ENCODE measurements at regions of chr1 and their contacts with region 1.

Region 1: DNA sequence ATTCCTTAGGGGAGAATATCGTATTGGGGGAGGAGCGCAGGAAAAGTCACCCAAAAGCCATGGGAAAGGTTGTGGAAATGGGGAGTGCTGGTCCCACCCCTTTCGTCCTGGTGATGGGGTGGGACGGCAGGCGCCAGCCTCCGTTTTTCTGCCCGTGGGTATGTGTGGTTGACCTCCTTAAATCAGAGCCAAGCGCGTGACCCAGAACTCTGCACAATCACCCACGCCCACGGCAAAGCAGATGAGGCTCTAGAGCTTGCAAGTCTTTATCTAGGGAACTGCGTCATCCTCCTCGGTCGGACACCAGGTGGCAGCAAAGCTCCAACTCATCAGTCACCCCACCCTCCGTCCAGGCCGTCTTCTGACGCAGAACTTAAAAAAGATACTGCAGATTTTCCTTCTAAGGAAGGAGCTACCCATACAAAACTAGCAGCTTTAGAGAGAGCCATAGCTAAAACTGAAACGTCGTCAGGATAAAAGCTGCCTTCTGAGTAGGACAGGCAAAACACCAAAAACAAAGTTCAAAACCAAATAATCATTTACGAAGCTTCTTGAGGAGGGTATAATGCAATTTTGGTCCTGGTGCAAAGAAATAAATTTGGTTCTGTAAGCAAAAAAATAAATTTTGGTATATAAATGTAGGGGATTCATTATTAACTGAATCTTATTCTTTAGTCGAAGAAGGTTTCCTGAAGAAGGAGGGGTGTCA is 62.0 kb downstream of the TBX19 start:
- DNase-seq: peak; percentile 61
- ATAC-seq: peak; percentile 98
- H3K4me3 ChIP-seq: no peak overlapping the region
- H3K27ac ChIP-seq: no peak overlapping the region
- H3K4me1 ChIP-seq: peaks cover 10% of the 10 kb centered on the region
- H3K27me3 ChIP-seq: no peaks in the 10 kb centered on the region
- CTCF ChIP-seq: peak; percentile 73 to 91 (median 82)
- EP300 ChIP-seq: no peak
- POLR2A ChIP-seq: no peak
- RAD21 ChIP-seq: peak; percentile 86

Region 2: GRCh38 chr1:168202941-168203654 is 139.6 kb before region 1 on chr1:
- CTCF ChIA-PET with region 1: no interaction called
- POLR2A ChIA-PET with region 1: no interaction called
- RAD21 ChIA-PET with region 1: no interaction called
- SMC1A ChIA-PET with region 1: no interaction called
- in situ Hi-C with region 1: no loop called
- intact Hi-C with region 1: no loop called
- DNase-seq: no peak
- ATAC-seq: no peak
- H3K4me3 ChIP-seq: no peak overlapping the region
- H3K27ac ChIP-seq: no peak overlapping the region
- H3K4me1 ChIP-seq: no peaks in the 10 kb centered on the region
- H3K27me3 ChIP-seq: no peaks in the 10 kb centered on the region
- CTCF ChIP-seq: no peak
- EP300 ChIP-seq: no peak
- POLR2A ChIP-seq: no peak
- RAD21 ChIP-seq: no peak

Region 3: DNA sequence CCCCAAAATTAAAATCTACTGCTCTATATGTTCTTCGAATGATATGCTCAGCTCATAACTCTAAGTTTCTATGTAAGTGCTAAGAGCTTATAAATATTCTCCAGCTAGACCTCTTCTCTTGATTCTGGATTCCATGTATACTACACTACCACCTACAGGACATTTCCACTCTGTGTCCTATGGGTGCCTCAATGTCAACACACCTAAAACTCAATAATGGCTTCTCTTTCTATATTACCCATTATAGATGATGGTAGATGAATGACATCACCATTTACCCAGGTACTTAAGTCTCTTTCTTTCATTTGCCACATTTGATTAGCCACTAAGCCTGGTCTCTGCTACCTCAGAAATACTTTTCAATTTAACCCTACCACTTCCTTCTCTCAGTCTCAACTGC is 20.8 kb before region 1 on chr1:
- CTCF ChIA-PET with region 1: interaction called, 20 read pairs
- POLR2A ChIA-PET with region 1: no interaction called
- RAD21 ChIA-PET with region 1: no interaction called
- SMC1A ChIA-PET with region 1: interaction called, 12 read pairs
- in situ Hi-C with region 1: no loop called
- intact Hi-C with region 1: no loop called
- DNase-seq: no peak
- ATAC-seq: peak; percentile 84
- H3K4me3 ChIP-seq: no peak overlapping the region
- H3K27ac ChIP-seq: no peak overlapping the region
- H3K4me1 ChIP-seq: no peaks in the 10 kb centered on the region
- H3K27me3 ChIP-seq: no peaks in the 10 kb centered on the region
- CTCF ChIP-seq: peak; percentile 27 to 47 (median 37); a peak in 4 of 6 replicates
- EP300 ChIP-seq: no peak
- POLR2A ChIP-seq: no peak
- RAD21 ChIP-seq: peak; percentile 49

Region 4: GRCh38 chr1:168403140-168403539 is 60.4 kb after region 1 on chr1:
- CTCF ChIA-PET with region 1: interaction called, 10 read pairs
- POLR2A ChIA-PET with region 1: interaction called, 4 read pairs
- RAD21 ChIA-PET with region 1: interaction called, 14 read pairs
- SMC1A ChIA-PET with region 1: interaction called, 11 read pairs
- in situ Hi-C with region 1: no loop called
- intact Hi-C with region 1: no loop called
- DNase-seq: no peak
- ATAC-seq: no peak
- H3K4me3 ChIP-seq: no peak overlapping the region
- H3K27ac ChIP-seq: no peak overlapping the region
- H3K4me1 ChIP-seq: no peaks in the 10 kb centered on the region
- H3K27me3 ChIP-seq: no peaks in the 10 kb centered on the region
- CTCF ChIP-seq: no peak
- EP300 ChIP-seq: no peak
- POLR2A ChIP-seq: no peak
- RAD21 ChIP-seq: no peak

Region 5: DNA sequence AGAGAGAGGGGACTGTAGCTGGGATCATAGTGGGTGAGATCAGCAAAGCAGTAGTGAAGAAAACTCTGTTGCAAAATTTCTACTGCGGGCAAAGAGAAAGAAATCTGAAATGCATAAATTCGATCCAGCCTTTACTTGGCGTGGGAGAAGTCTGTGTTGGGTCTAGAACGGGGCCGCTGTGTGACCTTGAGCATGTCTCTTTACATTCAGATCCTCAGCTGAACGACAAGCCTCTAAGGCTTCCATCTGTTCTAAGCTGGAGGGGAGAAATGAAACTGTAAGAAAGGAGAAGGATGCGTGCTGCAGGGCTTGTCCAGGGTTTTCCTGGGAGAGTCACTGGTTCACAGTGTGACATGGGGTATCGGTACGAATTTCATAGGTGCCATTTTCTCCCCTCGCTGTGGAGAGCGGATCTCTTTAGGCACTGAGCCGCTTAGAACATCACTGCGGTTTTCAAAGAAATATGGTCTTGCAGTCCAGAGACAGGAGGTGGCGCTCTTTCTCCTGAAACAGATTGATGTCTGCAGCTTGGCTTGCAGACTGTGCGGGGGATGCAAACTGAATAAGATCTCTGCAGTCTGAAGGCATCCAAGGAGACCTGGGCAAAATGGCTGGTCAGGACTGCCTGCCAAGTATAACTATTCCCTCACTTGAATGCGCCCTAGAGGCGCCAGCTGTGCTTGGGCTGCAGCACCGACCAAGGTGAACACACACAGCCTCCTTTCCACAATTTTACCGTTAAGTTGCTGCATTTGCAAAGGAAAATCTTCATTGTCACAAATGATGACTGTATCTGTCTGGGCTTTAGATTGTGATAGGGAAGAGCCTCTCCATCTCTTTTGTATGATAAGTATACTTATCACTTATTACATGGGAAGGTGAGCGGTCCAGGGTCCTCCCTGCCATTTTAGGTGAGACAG is 97.0 kb after region 1 on chr1:
- CTCF ChIA-PET with region 1: interaction called, 283 read pairs
- POLR2A ChIA-PET with region 1: interaction called, 7 read pairs
- RAD21 ChIA-PET with region 1: interaction called, 193 read pairs
- SMC1A ChIA-PET with region 1: interaction called, 239 read pairs
- in situ Hi-C with region 1: no loop called
- intact Hi-C with region 1: loop called (anchors 2 kb)
- DNase-seq: peak; percentile 45
- ATAC-seq: peak; percentile 97
- H3K4me3 ChIP-seq: no peak overlapping the region
- H3K27ac ChIP-seq: no peak overlapping the region
- H3K4me1 ChIP-seq: no peaks in the 10 kb centered on the region
- H3K27me3 ChIP-seq: no peaks in the 10 kb centered on the region; a peak in 1 of 4 replicates
- CTCF ChIP-seq: peak; percentile 66 to 84 (median 73)
- EP300 ChIP-seq: no peak
- POLR2A ChIP-seq: no peak
- RAD21 ChIP-seq: peak; percentile 93

Region 6: DNA sequence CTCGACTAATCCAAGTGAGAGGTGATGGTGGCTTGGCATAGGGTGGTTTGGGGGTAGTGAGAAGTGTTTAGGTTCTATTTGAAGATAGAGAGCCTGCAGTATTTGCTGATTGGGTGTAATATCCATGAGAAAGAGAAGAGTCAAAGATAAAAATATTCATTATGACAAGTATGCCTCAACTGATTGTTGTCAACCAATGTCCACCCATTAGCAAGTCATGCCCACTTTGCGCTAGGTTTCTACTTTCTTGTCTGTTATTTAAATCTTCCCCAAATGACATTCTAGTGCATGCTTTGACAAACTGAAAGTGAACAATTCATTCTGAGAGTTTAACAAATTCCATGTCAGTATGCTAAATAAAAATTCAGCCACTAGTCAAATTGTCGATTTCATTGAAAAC is 229.9 kb after region 1 on chr1:
- CTCF ChIA-PET with region 1: interaction called, 18 read pairs
- POLR2A ChIA-PET with region 1: no interaction called
- RAD21 ChIA-PET with region 1: interaction called, 13 read pairs
- SMC1A ChIA-PET with region 1: interaction called, 13 read pairs
- in situ Hi-C with region 1: no loop called
- intact Hi-C with region 1: loop called (anchors 2 kb)
- DNase-seq: no peak
- ATAC-seq: peak; percentile 63
- H3K4me3 ChIP-seq: no peak overlapping the region
- H3K27ac ChIP-seq: no peak overlapping the region
- H3K4me1 ChIP-seq: no peaks in the 10 kb centered on the region
- H3K27me3 ChIP-seq: peaks cover 0 to 2% of the 10 kb centered on the region in 2 experiments; a peak in 1 of 4 replicates
- CTCF ChIP-seq: no peak
- EP300 ChIP-seq: no peak
- POLR2A ChIP-seq: no peak
- RAD21 ChIP-seq: no peak

Region 7: GRCh38 chr1:169161496-169162194 is 818.9 kb after region 1 on chr1:
- CTCF ChIA-PET with region 1: interaction called, 15 read pairs
- POLR2A ChIA-PET with region 1: no interaction called
- RAD21 ChIA-PET with region 1: interaction called, 6 read pairs
- SMC1A ChIA-PET with region 1: interaction called, 10 read pairs
- in situ Hi-C with region 1: no loop called
- intact Hi-C with region 1: no loop called
- DNase-seq: peak; percentile 34
- ATAC-seq: peak; percentile 95
- H3K4me3 ChIP-seq: no peak overlapping the region
- H3K27ac ChIP-seq: no peak overlapping the region; the same call in 1 of the 2 replicates
- H3K4me1 ChIP-seq: peaks cover 12% of the 10 kb centered on the region; the same call in 1 of the 2 replicates
- H3K27me3 ChIP-seq: no peaks in the 10 kb centered on the region
- CTCF ChIP-seq: peak in 1 of 3 experiments; percentile 5; a peak in 1 of 6 replicates
- EP300 ChIP-seq: no peak; a peak in 2 of 4 replicates
- POLR2A ChIP-seq: no peak
- RAD21 ChIP-seq: peak; percentile 66